ENCODE measurements at regions of chr16 and their contacts with region 1.

Region 1: GRCh38 chr16:68040507-68041288 is 17.6 kb downstream of the DUS2 start:
- DNase-seq: no peak
- H3K4me3 ChIP-seq: no peak overlapping the region
- CTCF ChIP-seq: peak; percentile 90

Region 2: GRCh38 chr16:67942200-67942509 is 98.5 kb before region 1 on chr16:
- CTCF ChIA-PET with region 1: interaction called, 10 read pairs
- POLR2A ChIA-PET with region 1: no interaction called
- DNase-seq: no peak
- H3K4me3 ChIP-seq: no peak overlapping the region
- CTCF ChIP-seq: peak; percentile 73

Region 3: DNA sequence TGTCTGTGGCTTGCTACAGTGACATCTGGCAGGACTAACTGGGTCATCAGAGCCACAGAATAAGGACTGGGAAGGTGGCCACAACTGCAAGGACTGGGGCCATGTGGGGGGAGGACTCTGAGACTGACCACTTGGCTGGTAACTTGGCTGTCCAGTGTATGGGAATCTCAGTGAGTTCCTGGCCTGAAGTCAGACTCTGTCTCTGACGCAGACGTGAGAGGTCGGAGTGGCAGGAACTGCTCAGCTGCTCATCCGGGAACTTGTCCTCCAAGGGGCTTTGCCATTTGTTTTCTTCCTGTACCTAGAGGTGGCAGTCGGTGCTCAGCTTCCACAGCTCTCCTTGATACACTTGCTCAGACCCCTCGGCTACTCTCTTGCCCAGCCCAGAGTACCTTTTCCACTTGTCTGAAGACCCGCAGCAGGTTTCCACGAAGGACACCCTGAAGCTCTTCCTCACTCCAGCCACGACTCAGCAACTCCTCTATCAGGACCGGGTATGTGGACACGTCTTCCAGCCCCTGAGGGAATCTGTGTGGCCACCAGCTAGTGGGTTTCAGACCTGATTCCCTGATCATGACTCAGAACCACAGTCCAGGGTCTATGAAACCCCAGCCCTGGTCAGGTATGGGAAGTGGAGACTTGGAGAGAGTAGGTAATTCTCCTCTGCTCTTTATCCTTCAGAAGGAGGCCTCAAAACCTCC is 53.1 kb before region 1 on chr16:
- CTCF ChIA-PET with region 1: interaction called, 20 read pairs
- POLR2A ChIA-PET with region 1: no interaction called
- DNase-seq: no peak
- H3K4me3 ChIP-seq: no peak overlapping the region
- CTCF ChIP-seq: no peak

Region 4: DNA sequence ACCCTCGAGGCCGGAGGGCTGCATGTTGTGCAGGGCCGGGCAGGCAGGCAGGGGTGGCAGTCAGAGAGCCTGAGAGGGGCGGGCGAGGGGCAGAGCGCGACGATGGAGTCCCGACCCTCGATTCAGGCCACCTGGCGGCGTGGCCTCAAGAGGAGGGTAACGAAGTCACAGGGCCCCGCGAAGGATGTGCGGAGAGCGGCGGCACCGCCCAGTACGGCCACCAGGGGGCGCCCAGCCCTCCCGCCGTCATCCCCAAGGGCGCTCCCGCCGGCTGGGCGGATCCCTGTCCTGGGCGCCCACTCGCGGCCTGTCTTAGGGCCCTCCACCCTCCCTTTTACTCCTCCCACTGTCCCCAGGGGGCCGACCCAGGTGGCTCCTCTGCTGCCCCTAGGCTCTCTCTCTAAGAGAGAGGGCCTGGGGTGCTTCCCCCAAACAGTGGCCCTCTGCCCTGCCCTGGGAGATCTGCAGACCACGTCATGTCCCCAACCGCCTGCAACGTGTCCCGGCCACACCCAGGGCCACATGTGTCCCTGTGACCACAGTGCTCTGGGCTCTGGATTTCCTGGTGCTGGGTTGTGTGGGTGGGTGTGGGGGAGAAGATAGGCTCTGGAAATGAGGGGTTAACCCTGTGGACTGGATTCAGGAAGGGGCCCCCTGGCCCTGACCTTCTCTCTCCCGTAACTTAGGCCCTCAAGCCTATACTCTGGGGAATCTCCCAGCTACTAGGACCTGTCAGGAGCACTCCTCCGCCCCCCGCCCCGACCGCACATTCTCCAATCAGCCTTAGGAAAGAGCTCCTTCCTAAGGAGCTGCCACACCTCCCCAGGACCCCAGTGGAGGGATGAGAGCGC is 47.3 kb before region 1 on chr16:
- CTCF ChIA-PET with region 1: interaction called, 20 read pairs
- POLR2A ChIA-PET with region 1: no interaction called
- DNase-seq: no peak
- H3K4me3 ChIP-seq: peak overlapping the region; percentile 12; the same call in 1 of the 2 replicates
- CTCF ChIP-seq: peak; percentile 97

Region 5: DNA sequence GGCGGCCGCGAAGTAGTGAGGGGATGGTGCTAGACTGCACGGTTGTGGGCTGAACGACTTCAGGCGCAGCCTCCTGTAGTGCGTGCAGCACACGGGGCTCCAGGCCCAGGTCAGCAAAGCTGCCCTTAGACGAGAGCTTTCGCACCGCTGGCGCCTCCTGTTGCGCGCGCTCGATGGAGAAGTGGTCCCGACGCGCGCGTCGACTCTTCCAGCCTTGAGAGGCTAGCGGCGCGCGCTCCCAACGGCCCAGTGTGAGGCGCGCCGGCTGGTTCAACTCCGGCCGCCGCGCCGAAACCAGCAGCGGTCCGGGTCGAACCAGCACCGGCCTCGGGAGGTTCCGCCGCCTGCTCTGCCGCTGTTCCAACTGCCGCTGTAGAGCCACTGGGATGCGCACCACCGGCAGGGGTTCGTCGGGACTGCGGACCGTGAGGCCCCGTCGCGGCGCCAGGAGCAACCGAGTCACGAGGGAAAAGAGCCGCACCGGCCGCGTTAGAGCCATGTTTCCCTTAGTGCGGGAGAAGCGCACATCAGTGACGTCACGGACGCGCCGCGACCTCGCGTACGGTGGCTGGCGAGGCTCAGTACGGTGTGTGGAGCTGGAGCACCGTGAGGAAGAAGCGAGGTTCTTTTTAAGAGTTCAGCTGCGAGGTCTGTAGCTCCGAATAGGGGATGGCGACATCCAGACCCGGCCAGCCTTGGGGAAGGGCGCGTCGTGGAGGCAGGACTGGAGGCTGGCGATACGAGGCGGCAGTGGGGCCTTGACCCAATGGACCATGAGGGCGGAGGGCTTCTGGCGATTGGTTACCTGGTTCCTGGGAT is 17.8 kb before region 1 on chr16 and contains the starts of genes DDX28 and DUS2:
- CTCF ChIA-PET with region 1: interaction called, 43 read pairs
- POLR2A ChIA-PET with region 1: interaction called, 3 read pairs
- DNase-seq: peak; percentile 38
- H3K4me3 ChIP-seq: peak within 1 kb of the TSS; percentile 99
- CTCF ChIP-seq: no peak

Region 6: DNA sequence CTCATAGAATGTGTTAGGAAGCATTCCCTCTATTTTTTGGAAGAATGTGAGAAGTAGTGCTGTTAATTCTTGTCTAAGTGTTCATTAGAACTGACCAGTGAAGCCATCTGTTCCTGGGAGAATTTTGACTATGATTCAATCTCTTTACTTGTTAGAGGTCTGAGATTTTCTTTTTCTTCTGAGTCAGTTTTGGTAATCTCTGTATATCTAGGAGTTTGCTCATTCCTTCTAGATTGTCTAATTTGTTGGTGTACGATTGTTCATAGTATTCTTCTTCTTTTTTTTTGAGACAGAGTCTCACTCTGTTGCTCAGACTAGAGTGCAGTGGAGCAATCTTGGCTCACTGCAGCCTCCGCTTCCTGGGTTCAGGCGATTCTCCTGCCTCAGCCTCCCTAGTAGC is 64.9 kb after region 1 on chr16:
- CTCF ChIA-PET with region 1: no interaction called
- POLR2A ChIA-PET with region 1: no interaction called
- DNase-seq: no peak
- H3K4me3 ChIP-seq: no peak overlapping the region
- CTCF ChIP-seq: no peak

Region 7: DNA sequence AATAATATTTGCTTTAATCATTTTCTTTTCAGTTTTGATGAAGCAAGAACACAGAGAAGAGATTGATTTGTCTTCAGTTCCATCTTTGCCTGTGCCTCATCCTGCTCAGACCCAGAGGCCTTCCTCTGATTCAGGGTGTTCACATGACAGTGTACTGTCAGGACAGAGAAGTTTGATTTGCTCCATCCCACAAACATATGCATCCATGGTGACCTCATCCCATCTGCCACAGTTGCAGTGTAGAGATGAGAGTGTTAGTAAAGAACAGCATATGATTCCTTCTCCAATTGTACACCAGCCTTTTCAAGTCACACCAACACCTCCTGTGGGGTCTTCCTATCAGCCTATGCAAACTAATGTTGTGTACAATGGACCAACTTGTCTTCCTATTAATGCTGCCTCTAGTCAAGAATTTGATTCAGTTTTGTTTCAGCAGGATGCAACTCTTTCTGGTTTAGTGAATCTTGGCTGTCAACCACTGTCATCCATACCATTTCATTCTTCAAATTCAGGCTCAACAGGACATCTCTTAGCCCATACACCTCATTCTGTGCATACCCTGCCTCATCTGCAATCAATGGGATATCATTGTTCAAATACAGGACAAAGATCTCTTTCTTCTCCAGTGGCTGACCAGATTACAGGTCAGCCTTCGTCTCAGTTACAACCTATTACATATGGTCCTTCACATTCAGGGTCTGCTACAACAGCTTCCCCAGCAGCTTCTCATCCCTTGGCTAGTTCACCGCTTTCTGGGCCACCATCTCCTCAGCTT is 150.2 kb after region 1 on chr16:
- CTCF ChIA-PET with region 1: no interaction called
- POLR2A ChIA-PET with region 1: no interaction called
- DNase-seq: no peak
- H3K4me3 ChIP-seq: no peak overlapping the region
- CTCF ChIP-seq: no peak